CD14-positive monocyte (primary cell): ENCODE measurements at regions of chr2 and their contacts with region 1.

Region 1: DNA sequence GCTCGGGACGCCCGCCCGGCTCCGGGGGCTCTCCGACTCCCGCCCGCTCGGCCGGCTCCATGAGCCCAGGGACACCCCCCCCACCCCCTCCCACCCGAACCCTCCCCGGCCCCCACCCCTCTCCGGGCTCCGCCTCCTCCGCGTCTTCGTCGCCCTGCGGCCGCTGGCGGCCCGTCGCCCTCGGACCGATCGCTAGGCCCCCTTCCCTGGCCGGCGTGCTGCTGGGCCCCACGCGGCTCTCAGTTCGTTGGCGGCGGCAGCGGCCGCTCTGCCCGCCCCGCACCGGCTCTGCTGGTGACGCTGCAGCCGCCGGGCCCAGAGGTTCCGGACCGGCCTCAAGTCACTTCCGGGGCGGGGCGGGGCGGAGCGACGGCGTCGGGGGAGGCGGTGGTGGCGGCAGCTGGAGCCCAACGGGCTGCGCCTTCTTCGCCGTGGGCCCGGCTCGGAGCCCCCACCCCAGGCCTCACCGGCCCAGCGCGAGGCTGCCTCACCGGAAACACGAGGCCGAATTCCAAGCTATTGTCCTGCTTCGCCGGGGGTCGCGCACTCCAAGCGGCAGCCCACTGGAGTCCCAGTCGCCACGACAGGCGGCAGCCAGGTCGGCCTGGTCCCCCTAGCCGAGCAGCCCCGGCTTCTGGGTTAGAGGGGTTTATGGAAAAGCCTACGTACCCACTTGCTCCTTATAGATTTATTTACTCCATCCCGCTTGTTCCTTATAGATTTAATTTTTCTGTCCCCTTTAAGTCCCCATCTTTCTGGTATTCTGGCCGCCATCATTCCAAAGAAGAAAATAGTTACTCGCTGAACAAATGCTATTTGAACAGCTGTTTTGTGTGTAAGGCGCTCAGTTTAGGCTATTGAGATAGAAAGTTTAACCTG is at the start of gene PSME4:
- DNase-seq: peak; percentile 82 to 85 (median 83)
- H3K4me3 ChIP-seq: peak within 1 kb of the TSS; percentile 66 to 95 (median 94)
- H3K4me3 Mint-ChIP-seq: peak within 1 kb of the TSS; percentile 96 to 98
- H3K27ac ChIP-seq: peak within 1 kb of the TSS; percentile 90 to 91
- H3K27ac Mint-ChIP-seq: peak within 1 kb of the TSS; percentile 96 to 98 (median 97)
- H3K4me1 ChIP-seq: peaks cover 20 to 30% of the 10 kb centered on the region in 2 donors
- H3K4me1 Mint-ChIP-seq: peaks cover 34% of the 10 kb centered on the region
- H3K27me3 ChIP-seq: no peaks in the 10 kb centered on the region
- H3K27me3 Mint-ChIP-seq: no peaks in the 10 kb centered on the region
- CTCF ChIP-seq: no peak
- polyA plus RNA-seq, gene PSME4: 2.1 to 17.7 (median 3.1) TPM

Region 2: GRCh38 chr2:53848062-53848461 is 122.9 kb before region 1 on chr2:
- intact Hi-C with region 1: no loop called
- DNase-seq: peak in 2 of 3 donors; percentile 3 to 35
- H3K4me3 ChIP-seq: no peak overlapping the region
- H3K4me3 Mint-ChIP-seq: no peak overlapping the region
- H3K27ac ChIP-seq: no peak overlapping the region
- H3K27ac Mint-ChIP-seq: peak overlapping the region in 1 of 7 donors; percentile 6
- H3K4me1 ChIP-seq: no peaks in the 10 kb centered on the region
- H3K4me1 Mint-ChIP-seq: peaks cover 6% of the 10 kb centered on the region
- H3K27me3 ChIP-seq: no peaks in the 10 kb centered on the region
- H3K27me3 Mint-ChIP-seq: peaks cover 0 to 4% (median 3%) of the 10 kb centered on the region in 3 donors
- CTCF ChIP-seq: no peak

Region 3: DNA sequence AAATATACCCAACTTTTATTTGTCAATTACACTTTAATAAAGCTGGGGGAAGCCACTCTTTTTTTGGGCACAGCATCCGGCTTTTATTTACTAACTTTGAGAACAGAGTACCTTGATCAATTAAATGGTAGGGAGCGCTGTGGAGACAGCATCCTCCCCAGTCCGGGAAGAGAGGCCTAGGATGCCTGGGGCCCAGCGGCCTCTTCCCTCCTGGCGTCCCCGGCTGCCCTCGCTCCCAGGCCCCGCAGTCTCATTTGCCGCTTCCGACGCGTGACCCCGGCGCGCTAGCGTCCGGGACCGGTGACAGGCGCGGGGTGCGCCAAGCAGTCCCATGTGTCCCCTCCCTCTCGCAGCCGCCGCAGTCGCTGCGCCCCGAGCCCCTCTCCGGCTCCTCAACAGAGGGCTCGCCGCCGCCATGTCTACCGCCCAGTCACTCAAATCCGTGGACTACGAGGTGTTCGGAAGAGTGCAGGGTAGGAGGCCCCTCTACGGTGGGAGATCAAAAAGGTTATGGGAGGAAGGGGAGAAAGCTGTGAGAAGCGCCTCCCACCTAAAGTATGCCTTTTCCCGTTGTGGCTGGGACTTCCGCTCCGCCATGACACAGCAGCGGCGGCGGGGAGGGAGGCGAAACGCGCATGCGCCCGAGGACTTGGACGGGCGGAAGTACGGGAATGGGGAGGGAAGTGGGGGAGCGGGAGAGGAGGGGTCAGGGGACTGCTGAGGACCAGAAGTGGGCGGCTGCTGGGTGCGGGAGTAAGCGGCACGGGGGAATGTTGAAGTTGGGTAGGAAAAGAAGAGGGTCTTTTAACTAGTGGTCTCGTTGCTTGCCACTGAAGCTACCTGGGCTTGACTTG is 144.5 kb after region 1 on chr2 and contains the start of gene ACYP2:
- intact Hi-C with region 1: loop called (anchors 5 kb)
- DNase-seq: peak; percentile 90 to 96 (median 92)
- H3K4me3 ChIP-seq: peak within 1 kb of the TSS; percentile 79 to 84 (median 84)
- H3K4me3 Mint-ChIP-seq: peak within 1 kb of the TSS; percentile 90 to 97
- H3K27ac ChIP-seq: peak within 1 kb of the TSS; percentile 98
- H3K27ac Mint-ChIP-seq: peak within 1 kb of the TSS; percentile 99 to 100 (median 100)
- H3K4me1 ChIP-seq: peaks cover 6 to 11% of the 10 kb centered on the region in 2 donors
- H3K4me1 Mint-ChIP-seq: peaks cover 9% of the 10 kb centered on the region
- H3K27me3 ChIP-seq: no peaks in the 10 kb centered on the region
- H3K27me3 Mint-ChIP-seq: peaks cover 0 to 8% (median 5%) of the 10 kb centered on the region in 3 donors
- CTCF ChIP-seq: no peak
- polyA plus RNA-seq, gene ACYP2: 6.2 to 10.8 (median 10.3) TPM